MCF 10A (cell line): ENCODE measurements at regions of chr12 and their contacts with region 1.

Region 1: GRCh38 chr12:54419088-54419892 is at the start of gene ITGA5:
- DNase-seq: peak; percentile 86
- H3K4me3 Mint-ChIP-seq: peak within 1 kb of the TSS; percentile 94
- H3K27ac Mint-ChIP-seq: peak within 1 kb of the TSS; percentile 93
- H3K4me1 Mint-ChIP-seq: peaks cover 55% of the 10 kb centered on the region
- H3K27me3 Mint-ChIP-seq: no peaks in the 10 kb centered on the region
- CTCF ChIP-seq: no peak
- total RNA-seq, gene ITGA5: 110 and 184 TPM in 2 replicates

Region 2: GRCh38 chr12:54431911-54432814 is 12.9 kb after region 1 on chr12:
- CTCF ChIA-PET with region 1: interaction called, 127 read pairs
- POLR2A ChIA-PET with region 1: interaction called, 108 read pairs
- intact Hi-C with region 1: loop called (anchors 1 kb)
- DNase-seq: peak; percentile 97
- H3K4me3 Mint-ChIP-seq: peak overlapping the region; percentile 56
- H3K27ac Mint-ChIP-seq: peak overlapping the region; percentile 83
- H3K4me1 Mint-ChIP-seq: peaks cover 55% of the 10 kb centered on the region
- H3K27me3 Mint-ChIP-seq: no peaks in the 10 kb centered on the region
- CTCF ChIP-seq: no peak

Region 3: GRCh38 chr12:54439521-54440255 is 20.4 kb after region 1 on chr12:
- CTCF ChIA-PET with region 1: interaction called, 127 read pairs
- POLR2A ChIA-PET with region 1: interaction called, 4 read pairs
- intact Hi-C with region 1: no loop called
- DNase-seq: peak; percentile 73
- H3K4me3 Mint-ChIP-seq: no peak overlapping the region
- H3K27ac Mint-ChIP-seq: peak overlapping the region; percentile 22
- H3K4me1 Mint-ChIP-seq: peaks cover 13% of the 10 kb centered on the region
- H3K27me3 Mint-ChIP-seq: no peaks in the 10 kb centered on the region
- CTCF ChIP-seq: peak; percentile 91